A673 (cell line): ENCODE measurements at regions of chr6 and their contacts with region 1.

Region 1: GRCh38 chr6:168157272-168158007 is 78.4 kb upstream of the FRMD1 start:
- DNase-seq: peak; percentile 80
- H3K4me3 ChIP-seq: no peak overlapping the region
- H3K27ac ChIP-seq: peak overlapping the region; percentile 76
- H3K4me1 ChIP-seq: peaks cover 40% of the 10 kb centered on the region
- H3K27me3 ChIP-seq: no peaks in the 10 kb centered on the region
- CTCF ChIP-seq: no peak

Region 2: GRCh38 chr6:168302534-168302933 is 145.1 kb after region 1 on chr6:
- CTCF ChIA-PET with region 1: no interaction called
- POLR2A ChIA-PET with region 1: no interaction called
- intact Hi-C with region 1: loop called (anchors 5 kb)
- DNase-seq: peak; percentile 93
- H3K4me3 ChIP-seq: peak overlapping the region; percentile 32
- H3K27ac ChIP-seq: peak overlapping the region; percentile 92
- H3K4me1 ChIP-seq: peaks cover 36% of the 10 kb centered on the region
- H3K27me3 ChIP-seq: no peaks in the 10 kb centered on the region
- CTCF ChIP-seq: no peak

Region 3: DNA sequence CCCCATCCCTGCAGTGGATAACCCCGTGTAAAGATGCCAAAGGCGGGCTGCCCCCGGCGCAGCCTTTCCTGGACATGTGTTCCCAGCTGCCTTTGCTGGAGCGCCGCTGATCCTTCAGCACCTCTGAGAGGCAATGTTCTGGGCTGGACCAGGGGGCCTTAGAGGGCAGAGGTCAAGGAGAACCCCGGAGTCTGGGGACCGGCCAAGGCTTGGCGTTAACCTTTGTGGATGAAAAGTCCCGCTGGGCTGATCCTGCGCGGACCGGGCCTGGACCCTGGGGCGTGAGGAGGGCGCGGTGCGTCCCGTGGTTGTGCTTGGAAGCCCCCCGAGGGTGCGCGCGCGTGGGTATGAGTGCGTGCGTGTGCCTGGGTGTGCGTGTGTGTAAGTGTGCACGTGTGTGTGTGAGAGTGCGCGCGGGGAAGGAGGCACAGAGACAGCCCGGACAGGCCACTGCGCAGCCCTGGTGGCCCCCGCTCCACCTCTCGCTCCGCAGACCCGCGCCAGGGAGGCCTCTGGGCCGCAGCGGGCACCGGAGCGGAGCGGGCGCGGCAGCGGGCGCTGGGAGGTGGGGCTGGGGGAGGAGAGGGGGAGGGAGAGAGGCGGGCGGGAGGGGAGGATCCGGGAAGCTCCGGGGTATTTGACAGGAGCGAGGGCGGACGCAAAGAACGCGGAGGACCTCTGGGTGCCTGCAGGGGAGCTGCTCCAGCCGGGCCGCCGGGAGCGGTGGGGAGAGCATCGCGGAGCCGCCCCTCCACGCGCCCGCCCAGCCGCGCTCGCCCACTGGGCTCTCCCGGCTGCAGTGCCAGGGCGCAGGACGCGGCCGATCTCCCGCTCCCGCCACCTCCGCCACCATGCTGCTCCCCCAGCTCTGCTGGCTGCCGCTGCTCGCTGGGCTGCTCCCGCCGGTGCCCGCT is 283.3 kb after region 1 on chr6 and contains the start of gene SMOC2:
- CTCF ChIA-PET with region 1: no interaction called
- POLR2A ChIA-PET with region 1: no interaction called
- intact Hi-C with region 1: loop called (anchors 10 kb)
- DNase-seq: peak; percentile 28
- H3K4me3 ChIP-seq: peak within 1 kb of the TSS; percentile 42
- H3K27ac ChIP-seq: no peak within 1 kb of the TSS
- H3K4me1 ChIP-seq: peaks cover 7% of the 10 kb centered on the region
- H3K27me3 ChIP-seq: peaks cover 60% of the 10 kb centered on the region
- CTCF ChIP-seq: no peak
- total RNA-seq, gene SMOC2: 1.7 and 1.8 TPM in 2 replicates

Region 4: DNA sequence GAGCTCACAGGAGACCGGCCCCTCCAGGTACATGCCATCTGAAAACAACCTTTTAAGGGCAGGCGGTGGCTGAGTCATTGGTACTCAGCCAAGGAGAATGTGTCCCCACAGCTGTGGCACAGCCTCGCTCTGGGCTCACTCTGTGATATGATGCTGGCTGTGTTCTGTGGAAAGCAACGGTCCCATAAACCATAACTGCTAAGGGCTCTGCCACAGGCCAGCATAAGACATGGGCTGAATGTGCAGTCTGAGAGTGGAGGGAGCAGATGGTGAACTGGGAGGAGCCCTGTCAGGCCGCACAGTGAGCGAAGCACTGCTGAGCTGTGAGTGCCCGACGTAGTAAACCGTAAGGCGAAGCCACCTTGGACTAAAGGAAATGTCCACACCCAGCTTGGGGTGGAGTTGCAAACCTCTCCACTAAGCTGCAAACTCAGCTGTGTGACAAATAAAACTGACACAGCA is 720.4 kb after region 1 on chr6:
- CTCF ChIA-PET with region 1: no interaction called
- POLR2A ChIA-PET with region 1: interaction called, 15 read pairs
- intact Hi-C with region 1: no loop called
- DNase-seq: no peak
- H3K4me3 ChIP-seq: no peak overlapping the region
- H3K27ac ChIP-seq: no peak overlapping the region
- H3K4me1 ChIP-seq: no peaks in the 10 kb centered on the region
- H3K27me3 ChIP-seq: no peaks in the 10 kb centered on the region
- CTCF ChIP-seq: no peak

Region 5: DNA sequence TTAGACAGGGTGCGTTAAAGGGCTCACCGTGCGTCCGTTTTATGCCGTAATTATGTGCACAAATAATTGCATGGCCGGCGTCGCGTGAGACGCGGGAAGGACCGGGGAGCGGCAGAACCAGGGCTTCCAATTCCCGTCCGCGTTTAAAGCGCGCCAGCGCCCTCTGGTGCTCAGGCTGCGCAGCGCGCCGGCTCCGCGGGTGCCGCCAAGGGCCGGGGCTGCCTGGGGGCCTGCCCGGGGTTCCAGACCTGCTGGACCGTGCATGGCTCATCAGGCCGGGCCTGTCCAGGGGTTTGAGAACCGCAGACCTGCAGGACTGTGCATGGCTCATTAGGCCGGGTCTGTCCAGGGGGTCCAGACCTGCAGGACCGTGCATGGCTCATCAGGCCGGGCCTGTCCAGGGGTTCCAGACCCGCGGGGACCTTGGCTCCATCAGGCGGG is 727.2 kb after region 1 on chr6:
- CTCF ChIA-PET with region 1: no interaction called
- POLR2A ChIA-PET with region 1: no interaction called
- intact Hi-C with region 1: loop called (anchors 2 kb)
- DNase-seq: peak; percentile 73
- H3K4me3 ChIP-seq: no peak overlapping the region
- H3K27ac ChIP-seq: no peak overlapping the region
- H3K4me1 ChIP-seq: no peaks in the 10 kb centered on the region
- H3K27me3 ChIP-seq: no peaks in the 10 kb centered on the region
- CTCF ChIP-seq: peak; percentile 91